Transverse colon (tissue), 4 donors: ENCODE measurements at regions of chr1 and their contacts with region 1.

Region 1: GRCh38 chr1:88118176-88118845 is 565.8 kb upstream of the PKN2 start:
- DNase-seq: no peak
- H3K4me3 ChIP-seq: no peak overlapping the region
- H3K27ac ChIP-seq: no peak overlapping the region
- H3K4me1 ChIP-seq: no peaks in the 10 kb centered on the region
- H3K27me3 ChIP-seq: no peaks in the 10 kb centered on the region
- CTCF ChIP-seq: no peak
- EP300 ChIP-seq: no peak
- POLR2A ChIP-seq: no peak

Region 2: GRCh38 chr1:88089961-88090360 is 28.4 kb before region 1 on chr1:
- in situ Hi-C with region 1: no loop called
- intact Hi-C with region 1: loop called (anchors 2 kb)
- DNase-seq: no peak
- H3K4me3 ChIP-seq: no peak overlapping the region
- H3K27ac ChIP-seq: no peak overlapping the region
- H3K4me1 ChIP-seq: no peaks in the 10 kb centered on the region
- H3K27me3 ChIP-seq: no peaks in the 10 kb centered on the region
- CTCF ChIP-seq: no peak
- EP300 ChIP-seq: no peak
- POLR2A ChIP-seq: no peak